Dendritic cell treated with granulocyte-macrophage colony-stimulating factor and Interleukin-4, amounts not matched to agents 40 ng/mL and 50 ng/mL, for 4 days (primary cell): ENCODE measurements at regions of chr3 and their contacts with region 1.

Region 1: DNA sequence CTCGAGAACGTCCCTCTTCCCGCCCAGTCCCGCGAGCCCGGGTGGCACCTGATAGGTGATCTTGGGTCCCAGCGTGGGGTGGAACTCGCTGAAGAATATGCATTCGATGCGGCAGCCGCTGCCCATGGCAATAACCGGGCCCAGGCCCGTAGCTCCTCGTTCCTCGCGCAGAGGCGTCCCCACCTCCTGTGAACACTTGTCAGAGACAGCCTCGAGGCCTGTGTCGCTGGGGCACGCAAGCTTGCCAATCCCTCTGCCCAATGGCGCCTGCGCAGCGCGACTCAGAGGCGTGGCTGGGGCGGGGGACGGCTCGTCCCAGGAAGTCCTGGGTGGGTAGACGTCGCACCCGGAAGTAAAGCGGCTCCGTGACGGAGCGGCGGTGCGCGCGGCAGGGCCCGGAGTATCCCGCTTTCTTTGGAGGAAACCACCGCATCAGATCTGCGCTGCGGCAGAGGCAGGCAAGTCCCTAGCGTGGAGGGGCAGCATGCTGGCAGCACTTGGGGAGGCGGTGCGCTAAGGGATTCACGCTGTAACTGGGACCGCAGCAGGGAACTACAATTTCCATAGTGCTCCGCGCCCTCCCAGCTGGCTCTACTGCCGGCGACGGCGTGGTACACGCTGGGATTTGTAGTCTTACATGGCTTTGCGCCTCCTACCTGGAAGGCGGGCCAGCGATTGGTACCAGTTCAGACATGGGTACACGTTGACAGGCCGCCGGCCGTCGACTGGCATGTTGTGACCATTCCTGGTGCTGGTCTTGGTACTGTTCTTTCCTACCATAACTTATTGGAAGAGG is at the starts of genes CYB561D2 and NPRL2:
- H3K4me3 Mint-ChIP-seq: peak within 1 kb of the TSS; percentile 90
- H3K27ac Mint-ChIP-seq: peak within 1 kb of the TSS; percentile 93
- H3K4me1 Mint-ChIP-seq: peaks cover 84% of the 10 kb centered on the region
- H3K27me3 Mint-ChIP-seq: no peaks in the 10 kb centered on the region

Region 2: GRCh38 chr3:50436114-50436674 is 85.5 kb after region 1 on chr3:
- intact Hi-C with region 1: loop called (anchors 5 kb)
- H3K4me3 Mint-ChIP-seq: no peak overlapping the region
- H3K27ac Mint-ChIP-seq: no peak overlapping the region
- H3K4me1 Mint-ChIP-seq: peaks cover 17% of the 10 kb centered on the region
- H3K27me3 Mint-ChIP-seq: peaks cover 10% of the 10 kb centered on the region

Region 3: GRCh38 chr3:50542177-50543034 is 191.7 kb after region 1 on chr3:
- intact Hi-C with region 1: loop called (anchors 1 kb)
- H3K4me3 Mint-ChIP-seq: no peak overlapping the region
- H3K27ac Mint-ChIP-seq: no peak overlapping the region
- H3K4me1 Mint-ChIP-seq: no peaks in the 10 kb centered on the region
- H3K27me3 Mint-ChIP-seq: peaks cover 37% of the 10 kb centered on the region